ENCODE measurements at regions of chr19 and their contacts with region 1.

Region 1: DNA sequence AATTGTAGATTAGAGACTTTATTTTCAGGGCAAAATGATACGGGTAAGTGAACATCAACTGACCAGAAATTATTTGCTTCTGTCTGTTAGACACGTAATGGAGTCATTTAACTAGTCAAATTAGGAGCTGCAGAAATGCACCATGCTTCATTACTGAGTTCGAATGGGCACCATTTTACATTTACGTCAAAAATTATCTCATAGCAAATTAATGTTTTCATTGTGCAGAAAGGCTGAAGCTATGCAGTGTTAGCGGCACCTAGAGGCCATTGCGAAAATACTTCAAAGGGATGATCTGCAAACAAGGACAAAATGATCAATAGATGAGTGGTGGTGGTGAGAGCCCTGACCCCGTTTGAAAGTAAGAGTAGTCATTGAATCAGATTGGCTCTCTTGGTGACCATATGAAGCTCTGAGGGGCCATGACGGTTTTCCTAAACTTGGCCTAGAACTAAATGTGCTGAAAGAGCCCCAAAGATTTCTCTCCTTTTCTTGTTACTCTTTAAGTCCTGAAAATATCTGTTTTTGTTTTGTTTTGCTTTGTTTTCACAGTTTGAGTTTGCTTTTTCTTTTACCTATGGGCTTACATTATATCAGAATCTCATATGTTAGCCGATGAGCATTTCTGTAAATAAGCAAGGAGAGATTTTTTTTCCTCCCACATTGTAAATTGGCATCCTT is 277.9 kb downstream of the ZNF536 start:
- DNase-seq: no peak
- H3K4me3 ChIP-seq: no peak overlapping the region
- H3K27ac ChIP-seq: no peak overlapping the region
- H3K4me1 ChIP-seq: no peaks in the 10 kb centered on the region
- H3K27me3 ChIP-seq: no peaks in the 10 kb centered on the region
- CTCF ChIP-seq: peak; percentile 69 to 86 (median 75)

Region 2: GRCh38 chr19:29745253-29745652 is 904.8 kb before region 1 on chr19:
- dilution Hi-C with region 1: loop called (anchors 10 kb)
- DNase-seq: no peak
- H3K4me3 ChIP-seq: no peak overlapping the region
- H3K27ac ChIP-seq: no peak overlapping the region
- H3K4me1 ChIP-seq: no peaks in the 10 kb centered on the region
- H3K27me3 ChIP-seq: no peaks in the 10 kb centered on the region
- CTCF ChIP-seq: peak in 1 of 3 experiments; percentile 24

Region 3: DNA sequence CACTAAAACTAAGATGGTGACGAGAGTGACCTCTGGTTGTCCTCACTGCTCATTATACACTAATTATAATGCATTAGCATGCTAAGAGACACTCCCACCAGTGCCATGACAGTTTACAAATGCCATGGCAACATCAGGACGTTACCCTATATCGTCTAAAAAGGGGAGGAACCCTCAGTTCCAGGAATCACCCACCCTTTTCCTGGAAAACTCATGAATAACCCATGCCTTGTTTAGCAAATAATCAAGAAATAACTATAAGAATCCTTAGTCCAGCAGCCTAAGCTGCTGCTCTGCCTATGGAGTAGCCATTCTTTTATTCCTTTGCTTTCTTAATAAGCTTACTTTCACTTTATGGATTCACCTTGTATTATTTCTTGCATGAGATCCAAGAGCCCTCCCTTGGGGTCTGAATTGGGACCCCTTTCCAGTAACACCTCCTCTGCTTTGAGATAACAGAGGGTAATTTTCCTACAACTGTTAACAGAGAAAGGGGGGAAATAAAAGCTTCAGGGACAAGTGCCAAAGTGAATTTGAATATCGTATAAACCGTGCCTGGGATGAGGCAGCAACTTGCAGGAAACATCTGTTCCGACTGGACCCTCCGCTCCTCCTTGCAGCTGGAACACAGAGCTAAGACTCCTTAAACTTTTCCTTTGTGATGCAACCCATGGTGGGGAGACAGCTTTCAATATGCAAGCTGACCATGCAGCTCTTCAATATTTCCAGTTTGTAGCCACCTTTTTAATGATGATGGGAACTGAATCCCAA is 154.4 kb after region 1 on chr19:
- dilution Hi-C with region 1: no loop called
- DNase-seq: no peak
- H3K4me3 ChIP-seq: no peak overlapping the region
- H3K27ac ChIP-seq: no peak overlapping the region
- H3K4me1 ChIP-seq: no peaks in the 10 kb centered on the region
- H3K27me3 ChIP-seq: no peaks in the 10 kb centered on the region
- CTCF ChIP-seq: no peak

Measured in keratinocyte (primary cell).